ENCODE measurements at regions of chr17 and their contacts with region 1.

Region 1: GRCh38 chr17:46072998-46073397 is 73.9 kb downstream of the STH start:
- DNase-seq: peak; percentile 30
- H3K4me3 ChIP-seq: no peak overlapping the region
- H3K27ac ChIP-seq: no peak overlapping the region
- H3K27me3 ChIP-seq: no peaks in the 10 kb centered on the region
- CTCF ChIP-seq: no peak

Region 2: GRCh38 chr17:45809484-45809883 is 263.5 kb before region 1 on chr17:
- CTCF ChIA-PET with region 1: no interaction called
- POLR2A ChIA-PET with region 1: no interaction called
- DNase-seq: no peak
- H3K4me3 ChIP-seq: no peak overlapping the region
- H3K27ac ChIP-seq: no peak overlapping the region
- H3K27me3 ChIP-seq: peaks cover 13% of the 10 kb centered on the region
- CTCF ChIP-seq: no peak

Region 3: DNA sequence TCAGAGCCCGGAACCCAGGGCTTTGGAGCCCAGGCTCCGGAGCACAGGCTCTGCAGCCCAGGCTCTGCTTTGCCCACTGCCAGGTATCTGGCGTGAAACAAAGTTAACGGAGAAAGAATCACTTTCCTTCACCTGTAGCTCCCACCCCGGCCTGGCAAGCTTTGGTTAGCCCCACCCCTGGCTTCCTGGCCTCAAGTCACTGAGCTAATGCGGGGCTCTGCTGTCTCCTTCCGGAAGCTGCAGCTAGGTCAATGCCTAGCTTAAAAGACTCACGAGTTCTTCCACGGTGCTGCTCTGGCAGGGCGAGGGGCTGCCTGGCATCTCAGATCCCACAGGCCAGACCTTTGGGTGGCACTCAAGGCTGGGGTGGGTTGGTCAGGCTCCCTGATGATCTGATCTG is 249.4 kb before region 1 on chr17:
- CTCF ChIA-PET with region 1: no interaction called
- POLR2A ChIA-PET with region 1: no interaction called
- DNase-seq: no peak
- H3K4me3 ChIP-seq: no peak overlapping the region
- H3K27ac ChIP-seq: no peak overlapping the region
- H3K27me3 ChIP-seq: peaks cover 9% of the 10 kb centered on the region
- CTCF ChIP-seq: no peak

Region 4: GRCh38 chr17:46097497-46097896 is 24.5 kb after region 1 on chr17:
- CTCF ChIA-PET with region 1: no interaction called
- POLR2A ChIA-PET with region 1: interaction called, 21 read pairs
- DNase-seq: no peak
- H3K4me3 ChIP-seq: no peak overlapping the region
- H3K27ac ChIP-seq: no peak overlapping the region
- H3K27me3 ChIP-seq: no peaks in the 10 kb centered on the region
- CTCF ChIP-seq: no peak

Region 5: GRCh38 chr17:46108550-46109110 is 35.6 kb after region 1 on chr17:
- CTCF ChIA-PET with region 1: no interaction called
- POLR2A ChIA-PET with region 1: no interaction called
- DNase-seq: no peak
- H3K4me3 ChIP-seq: no peak overlapping the region
- H3K27ac ChIP-seq: no peak overlapping the region
- H3K27me3 ChIP-seq: no peaks in the 10 kb centered on the region
- CTCF ChIP-seq: no peak

Measured in AG04450 (cell line).